Aorta (tissue), 5 donors: ENCODE measurements at regions of chr1 and their contacts with region 1.

Region 1: DNA sequence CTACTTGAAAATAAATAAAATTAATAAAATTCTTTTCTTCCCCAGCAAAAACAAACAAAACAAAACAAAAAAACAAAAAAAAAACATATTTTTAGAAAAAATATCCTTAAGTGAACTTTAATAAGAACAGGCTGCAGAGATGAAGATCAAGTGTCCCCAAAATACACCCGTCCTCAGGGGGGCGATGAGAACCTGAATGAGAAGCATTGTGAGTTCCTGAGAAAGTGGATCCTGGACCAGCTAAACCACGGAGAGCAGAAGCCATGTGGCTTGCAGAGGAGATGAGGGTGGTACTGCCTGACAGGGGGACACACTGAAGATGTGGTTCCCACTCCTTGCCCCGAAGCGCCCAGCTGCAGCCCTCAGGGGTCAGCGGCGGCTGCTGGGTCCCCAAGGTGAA is 89.3 kb downstream of the ITPKB start:
- DNase-seq: peak in 1 of 2 donors; percentile 57
- ATAC-seq: peak; percentile 6
- H3K4me3 ChIP-seq: no peak overlapping the region
- H3K27ac ChIP-seq: no peak overlapping the region
- H3K4me1 ChIP-seq: no peaks in the 10 kb centered on the region
- H3K27me3 ChIP-seq: no peaks in the 10 kb centered on the region

Region 2: GRCh38 chr1:226691247-226691646 is 41.5 kb after region 1 on chr1:
- intact Hi-C with region 1: loop called in 1 of 2 experiments (anchors 5 kb)
- DNase-seq: no peak
- ATAC-seq: peak; percentile 20
- H3K4me3 ChIP-seq: no peak overlapping the region
- H3K27ac ChIP-seq: no peak overlapping the region
- H3K4me1 ChIP-seq: peaks cover 9 to 15% of the 10 kb centered on the region in 2 donors
- H3K27me3 ChIP-seq: no peaks in the 10 kb centered on the region

Region 3: DNA sequence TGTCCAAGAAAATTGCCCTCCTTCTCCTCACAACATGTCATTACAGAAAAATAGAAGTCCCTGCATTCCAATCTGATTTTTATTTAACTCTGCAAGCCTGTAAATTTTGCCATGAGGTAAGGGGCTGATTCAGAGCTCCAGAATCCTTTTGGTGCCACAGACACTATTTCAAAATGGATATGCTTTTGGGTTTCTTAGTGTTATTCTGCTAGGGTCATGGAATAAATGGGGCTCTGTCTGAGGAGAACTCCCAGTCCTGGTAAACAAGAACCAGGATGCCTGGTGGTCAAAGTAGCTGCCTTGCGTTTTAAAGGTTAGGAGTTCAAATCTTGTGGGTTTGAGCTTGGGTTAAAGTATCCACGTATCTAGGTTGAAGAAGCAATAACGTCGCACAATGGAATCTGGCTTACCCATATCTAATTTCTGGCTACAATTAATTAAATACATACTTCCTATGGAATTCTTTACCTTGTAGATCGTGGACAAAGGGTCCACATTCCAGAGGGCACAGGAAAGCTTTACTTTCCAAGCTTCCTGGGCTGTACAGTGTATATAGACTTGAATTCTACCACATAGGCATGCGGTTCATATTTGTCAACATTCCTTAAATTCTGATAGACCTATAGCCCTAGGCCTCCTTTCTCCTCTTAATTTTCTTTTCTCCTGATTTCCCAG is 766.5 kb after region 1 on chr1:
- intact Hi-C with region 1: no loop called
- DNase-seq: no peak
- ATAC-seq: no peak
- H3K4me3 ChIP-seq: no peak overlapping the region
- H3K27ac ChIP-seq: peak overlapping the region in 1 of 2 donors; percentile 36
- H3K4me1 ChIP-seq: peaks cover 2 to 3% of the 10 kb centered on the region in 2 donors
- H3K27me3 ChIP-seq: no peaks in the 10 kb centered on the region